ENCODE measurements at regions of chr3 and their contacts with region 1.

Region 1: GRCh38 chr3:170811928-170812591 is 57.9 kb downstream of the RPL22L1 start:
- ATAC-seq: peak; percentile 63 to 77 (median 67)
- H3K4me3 ChIP-seq: no peak overlapping the region
- H3K27ac ChIP-seq: no peak overlapping the region
- H3K4me1 ChIP-seq: no peaks in the 10 kb centered on the region

Region 2: GRCh38 chr3:170414202-170414663 is 397.8 kb before region 1 on chr3:
- in situ Hi-C with region 1: loop called in 8 of 9 experiments (anchors 10 to 25 kb)
- ATAC-seq: peak in 6 of 8 experiments; percentile 17 to 66 (median 57)
- H3K4me3 ChIP-seq: no peak overlapping the region
- H3K27ac ChIP-seq: no peak overlapping the region
- H3K4me1 ChIP-seq: no peaks in the 10 kb centered on the region

Region 3: GRCh38 chr3:170419557-170420087 is 392.4 kb before region 1 on chr3:
- in situ Hi-C with region 1: loop called (anchors 10 to 25 kb)
- ATAC-seq: peak; percentile 55 to 80 (median 74)
- H3K4me3 ChIP-seq: peak overlapping the region; percentile 35 to 54 (median 38)
- H3K27ac ChIP-seq: no peak overlapping the region
- H3K4me1 ChIP-seq: peaks cover 0 to 6% of the 10 kb centered on the region in 2 donors

Region 4: DNA sequence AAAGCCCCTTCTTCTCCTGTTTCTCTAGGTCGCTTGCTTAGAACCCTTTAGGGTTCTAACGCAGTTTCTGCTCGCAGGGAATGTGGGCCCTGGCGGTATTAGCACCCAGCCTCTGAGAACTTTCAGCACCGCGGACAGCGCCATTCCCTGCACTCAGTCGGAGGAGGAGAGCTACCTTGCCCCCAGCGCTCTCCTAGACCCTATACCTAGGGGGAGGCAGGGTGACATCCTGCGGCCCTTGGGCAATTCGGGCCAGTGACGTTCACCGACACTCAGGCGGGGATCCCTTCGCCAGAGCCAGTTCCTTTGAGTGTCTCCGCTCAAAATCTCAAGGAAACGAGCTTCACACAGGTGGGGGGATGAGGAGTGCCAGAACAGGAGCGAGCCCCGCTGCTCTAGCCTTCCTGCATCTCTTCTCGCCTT is 227.5 kb before region 1 on chr3:
- in situ Hi-C with region 1: loop called in 1 of 9 experiments (anchors 25 kb)
- ATAC-seq: peak; percentile 60 to 96 (median 66)
- H3K4me3 ChIP-seq: peak overlapping the region; percentile 50 to 66 (median 52)
- H3K27ac ChIP-seq: no peak overlapping the region
- H3K4me1 ChIP-seq: no peaks in the 10 kb centered on the region

Region 5: DNA sequence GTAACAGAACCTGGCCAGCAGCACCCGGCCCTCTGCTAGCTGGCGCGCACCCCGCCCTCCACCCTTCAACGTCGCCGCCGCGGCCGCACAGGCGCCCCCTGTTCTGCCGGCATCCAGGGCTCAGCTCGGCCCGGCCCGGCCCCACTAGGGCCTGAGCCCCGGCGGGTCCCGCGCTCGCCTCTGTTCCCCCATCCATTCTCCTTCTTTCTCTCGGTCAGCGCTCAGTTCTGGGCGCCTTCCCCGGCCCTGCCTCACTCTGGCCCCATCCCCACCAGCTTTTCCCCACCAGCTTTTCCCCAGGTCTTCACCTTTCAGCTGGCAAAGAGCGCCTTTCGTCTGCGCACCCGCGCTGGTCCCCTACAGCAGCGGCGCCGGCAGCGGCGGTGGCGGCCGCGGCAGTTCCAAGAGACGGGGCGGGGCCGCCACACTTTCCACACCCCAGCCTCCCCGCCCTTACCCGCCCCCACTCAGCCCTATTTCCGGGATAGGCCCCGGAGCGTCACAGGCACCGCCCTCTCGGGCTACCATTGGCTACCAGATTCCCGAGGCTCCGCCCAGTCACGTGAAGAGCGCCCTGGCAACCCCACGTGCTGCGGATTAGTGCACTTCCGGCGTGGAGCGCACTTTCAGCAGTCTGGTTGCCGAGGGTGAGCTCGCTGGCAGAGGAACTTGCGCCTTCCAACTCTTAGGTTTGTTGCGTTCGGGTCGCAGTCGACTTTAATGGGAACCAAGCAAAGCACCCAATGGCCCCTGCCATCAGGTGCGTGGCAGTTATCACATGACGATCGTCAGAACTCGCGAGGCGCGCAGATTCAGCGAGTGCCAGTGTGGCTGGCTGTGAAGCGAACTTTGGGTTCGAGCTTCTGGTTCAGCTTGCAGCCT is 96.4 kb after region 1 on chr3 and contains the start of gene EIF5A2:
- in situ Hi-C with region 1: no loop called
- ATAC-seq: peak; percentile 88 to 95 (median 92)
- H3K4me3 ChIP-seq: peak within 1 kb of the TSS; percentile 36 to 50 (median 47)
- H3K27ac ChIP-seq: no peak within 1 kb of the TSS
- H3K4me1 ChIP-seq: peaks cover 0 to 5% of the 10 kb centered on the region in 2 donors
- total RNA-seq, gene EIF5A2: 1.1 to 7.5 (median 3.7) TPM

Region 6: GRCh38 chr3:171967137-171967783 is 1155.2 kb after region 1 on chr3:
- in situ Hi-C with region 1: no loop called
- ATAC-seq: peak; percentile 39 to 87 (median 76)
- H3K4me3 ChIP-seq: no peak overlapping the region
- H3K27ac ChIP-seq: peak overlapping the region in 1 of 2 donors; percentile 31
- H3K4me1 ChIP-seq: peaks cover 8 to 15% of the 10 kb centered on the region in 2 donors

Measured in motor neuron (in vitro differentiated cells).